IMR-90 (cell line): ENCODE measurements at regions of chr9 and their contacts with region 1.

Region 1: DNA sequence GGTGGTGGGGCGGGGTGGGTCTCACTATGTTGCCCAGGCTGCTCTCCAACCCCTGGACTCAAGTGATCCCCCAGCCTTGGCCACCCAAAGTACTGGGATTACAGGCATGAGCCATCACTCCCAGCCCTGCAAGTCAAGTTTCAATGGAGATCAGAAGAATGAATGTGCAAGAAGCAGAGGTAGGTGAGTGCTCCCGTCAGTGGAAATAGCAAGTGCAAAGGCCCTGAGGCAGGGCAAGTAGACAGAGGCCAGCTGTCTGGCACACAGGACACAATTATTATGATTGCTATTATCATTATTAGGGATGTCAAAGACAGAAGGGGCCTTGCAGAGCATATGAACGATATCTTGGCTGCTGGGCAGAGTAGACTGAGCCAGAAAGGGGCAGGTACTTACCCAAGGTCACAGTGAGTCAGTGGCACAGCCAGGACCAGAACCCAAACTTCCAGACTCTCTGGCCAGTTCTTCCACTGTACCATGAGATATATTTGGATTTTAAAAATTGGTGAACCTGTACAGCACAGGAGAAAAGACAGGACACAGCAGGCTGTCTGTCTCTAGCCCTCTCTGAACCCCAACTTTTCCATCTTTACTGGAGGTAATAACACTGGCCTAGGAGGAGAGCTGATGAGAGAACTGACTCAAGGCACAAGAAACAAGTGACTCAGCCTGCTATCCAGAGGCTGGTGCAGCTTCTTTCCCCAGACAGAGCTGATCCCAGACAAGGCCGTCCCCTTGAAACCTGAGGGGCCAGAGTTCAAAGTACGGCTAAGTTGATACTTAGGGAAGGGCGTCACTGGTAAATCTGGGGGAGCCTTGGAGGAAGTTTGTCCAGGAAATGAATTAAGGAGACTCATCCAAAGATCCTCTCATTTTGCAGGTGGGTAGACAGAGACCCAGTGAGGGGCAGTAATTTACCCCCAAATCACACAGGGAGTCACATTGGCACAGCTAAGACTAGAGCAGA is 1.4 kb downstream of the HDHD3 start:
- DNase-seq: peak; percentile 8
- ATAC-seq: no peak
- H3K4me3 ChIP-seq: no peak overlapping the region
- H3K27ac ChIP-seq: no peak overlapping the region
- H3K4me1 ChIP-seq: peaks cover 2% of the 10 kb centered on the region; the same call in 1 of the 2 replicates
- H3K27me3 ChIP-seq: peaks cover 3% of the 10 kb centered on the region; the same call in 1 of the 2 replicates
- CTCF ChIP-seq: no peak
- POLR2A ChIP-seq: no peak
- RAD21 ChIP-seq: no peak

Region 2: GRCh38 chr9:113139225-113139829 is 236.0 kb before region 1 on chr9:
- CTCF ChIA-PET with region 1: no interaction called
- POLR2A ChIA-PET with region 1: no interaction called
- dilution Hi-C with region 1: no loop called
- in situ Hi-C with region 1: no loop called
- intact Hi-C with region 1: no loop called
- DNase-seq: no peak
- ATAC-seq: no peak
- H3K4me3 ChIP-seq: no peak overlapping the region
- H3K27ac ChIP-seq: no peak overlapping the region
- H3K4me1 ChIP-seq: no peaks in the 10 kb centered on the region
- H3K27me3 ChIP-seq: peaks cover 16% of the 10 kb centered on the region
- CTCF ChIP-seq: no peak
- POLR2A ChIP-seq: no peak
- RAD21 ChIP-seq: no peak

Region 3: DNA sequence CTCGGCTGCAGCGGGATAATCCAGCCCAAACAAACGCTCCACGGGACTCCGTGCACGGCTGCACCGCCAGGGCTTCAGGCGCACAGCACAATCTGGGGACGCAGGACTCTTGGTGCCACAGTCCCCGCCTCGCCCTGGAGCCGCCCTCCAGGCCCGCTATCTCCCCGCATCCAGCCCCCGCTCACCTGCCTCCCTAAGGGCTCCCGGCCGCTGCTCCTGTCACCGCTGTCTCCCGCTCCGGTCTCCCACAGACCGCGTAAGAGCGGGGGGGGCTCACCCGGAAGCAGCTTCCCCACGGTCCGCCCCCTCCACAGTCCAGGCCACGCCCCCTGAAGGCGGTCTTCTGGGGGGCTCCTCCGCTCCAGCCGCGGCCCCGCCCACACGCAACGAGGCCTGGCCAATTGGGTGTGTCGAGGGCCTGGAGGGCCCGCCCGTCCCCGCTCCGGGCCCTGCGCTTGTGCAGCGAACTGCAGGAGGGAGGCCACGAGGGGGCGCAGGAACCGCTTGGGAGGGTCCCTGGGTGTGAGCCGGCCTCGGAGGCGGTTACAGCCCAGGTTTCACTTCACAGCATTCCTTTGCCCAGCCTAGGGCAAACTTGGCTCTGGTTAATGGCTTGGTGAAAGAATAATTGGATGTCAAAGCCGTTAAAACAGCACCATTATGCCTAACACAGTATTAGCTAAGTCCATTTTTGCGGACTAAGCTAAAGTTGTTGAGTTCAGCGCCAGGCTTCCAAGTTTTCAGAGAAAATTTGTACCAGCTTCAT is 25.9 kb after region 1 on chr9 and contains the start of gene ALAD:
- CTCF ChIA-PET with region 1: interaction called, 4 read pairs
- POLR2A ChIA-PET with region 1: no interaction called
- dilution Hi-C with region 1: no loop called
- in situ Hi-C with region 1: no loop called
- intact Hi-C with region 1: loop called (anchors 1 kb)
- DNase-seq: peak; percentile 97
- ATAC-seq: peak; percentile 99
- H3K4me3 ChIP-seq: peak within 1 kb of the TSS; percentile 92
- H3K27ac ChIP-seq: peak within 1 kb of the TSS; percentile 45
- H3K4me1 ChIP-seq: peaks cover 8% of the 10 kb centered on the region
- H3K27me3 ChIP-seq: no peaks in the 10 kb centered on the region
- CTCF ChIP-seq: peak; percentile 98
- POLR2A ChIP-seq: no peak
- RAD21 ChIP-seq: peak; percentile 70
- total RNA-seq, gene ALAD: 10.3 and 11.1 TPM in 2 replicates

Region 4: DNA sequence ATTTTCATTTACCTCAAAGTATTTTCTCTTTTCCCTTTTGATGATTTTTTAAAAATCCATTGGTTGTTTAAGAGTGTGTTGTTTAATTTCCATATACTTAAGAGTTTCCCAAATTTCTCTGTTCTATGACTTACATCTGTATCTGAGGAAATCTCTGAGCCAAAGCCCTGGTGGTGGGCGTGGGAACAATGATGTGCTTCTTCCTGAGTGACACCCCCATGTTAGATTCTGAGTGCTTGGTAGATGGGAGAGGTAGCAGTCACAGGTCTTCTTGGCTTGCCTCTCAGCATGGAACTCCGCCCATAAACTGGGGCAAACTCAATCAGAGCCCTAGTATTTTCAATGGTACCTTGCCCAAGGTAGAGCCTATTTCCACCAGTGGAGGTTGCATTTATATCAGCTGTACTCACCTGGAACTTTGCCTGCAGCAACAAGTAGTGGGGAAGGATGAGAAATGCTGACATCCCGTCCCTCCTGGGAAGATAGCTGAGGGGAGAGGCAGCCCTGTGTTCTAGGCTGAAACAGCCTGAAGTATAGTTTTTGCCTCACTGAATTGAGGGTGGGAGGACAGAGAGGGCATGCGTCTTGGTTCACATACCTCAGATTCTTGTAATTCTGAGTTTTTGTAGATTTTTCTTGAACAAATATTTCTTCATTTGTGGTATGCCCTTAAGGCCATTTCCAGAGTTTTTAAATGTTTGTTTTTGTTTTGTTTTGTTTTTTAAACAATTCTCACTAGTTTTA is 61.6 kb after region 1 on chr9:
- CTCF ChIA-PET with region 1: no interaction called
- POLR2A ChIA-PET with region 1: no interaction called
- dilution Hi-C with region 1: no loop called
- in situ Hi-C with region 1: no loop called
- intact Hi-C with region 1: no loop called
- DNase-seq: peak; percentile 17
- ATAC-seq: peak; percentile 98
- H3K4me3 ChIP-seq: no peak overlapping the region
- H3K27ac ChIP-seq: peak overlapping the region; percentile 31; the same call in 1 of the 2 replicates
- H3K4me1 ChIP-seq: peaks cover 4% of the 10 kb centered on the region; the same call in 1 of the 2 replicates
- H3K27me3 ChIP-seq: peaks cover 7% of the 10 kb centered on the region
- CTCF ChIP-seq: no peak
- POLR2A ChIP-seq: no peak
- RAD21 ChIP-seq: no peak